Sigmoid colon (tissue), 7 donors: ENCODE measurements at regions of chr9 and their contacts with region 1.

Region 1: GRCh38 chr9:125464591-125465385 is 203.2 kb downstream of the GAPVD1 start:
- DNase-seq: no peak
- H3K4me3 ChIP-seq: no peak overlapping the region
- H3K27ac ChIP-seq: peak overlapping the region in 1 of 4 donors; percentile 40
- H3K4me1 ChIP-seq: peaks cover 0 to 45% (median 37%) of the 10 kb centered on the region in 4 donors
- H3K27me3 ChIP-seq: no peaks in the 10 kb centered on the region
- CTCF ChIP-seq: no peak
- EP300 ChIP-seq: no peak
- POLR2A ChIP-seq: no peak

Region 2: DNA sequence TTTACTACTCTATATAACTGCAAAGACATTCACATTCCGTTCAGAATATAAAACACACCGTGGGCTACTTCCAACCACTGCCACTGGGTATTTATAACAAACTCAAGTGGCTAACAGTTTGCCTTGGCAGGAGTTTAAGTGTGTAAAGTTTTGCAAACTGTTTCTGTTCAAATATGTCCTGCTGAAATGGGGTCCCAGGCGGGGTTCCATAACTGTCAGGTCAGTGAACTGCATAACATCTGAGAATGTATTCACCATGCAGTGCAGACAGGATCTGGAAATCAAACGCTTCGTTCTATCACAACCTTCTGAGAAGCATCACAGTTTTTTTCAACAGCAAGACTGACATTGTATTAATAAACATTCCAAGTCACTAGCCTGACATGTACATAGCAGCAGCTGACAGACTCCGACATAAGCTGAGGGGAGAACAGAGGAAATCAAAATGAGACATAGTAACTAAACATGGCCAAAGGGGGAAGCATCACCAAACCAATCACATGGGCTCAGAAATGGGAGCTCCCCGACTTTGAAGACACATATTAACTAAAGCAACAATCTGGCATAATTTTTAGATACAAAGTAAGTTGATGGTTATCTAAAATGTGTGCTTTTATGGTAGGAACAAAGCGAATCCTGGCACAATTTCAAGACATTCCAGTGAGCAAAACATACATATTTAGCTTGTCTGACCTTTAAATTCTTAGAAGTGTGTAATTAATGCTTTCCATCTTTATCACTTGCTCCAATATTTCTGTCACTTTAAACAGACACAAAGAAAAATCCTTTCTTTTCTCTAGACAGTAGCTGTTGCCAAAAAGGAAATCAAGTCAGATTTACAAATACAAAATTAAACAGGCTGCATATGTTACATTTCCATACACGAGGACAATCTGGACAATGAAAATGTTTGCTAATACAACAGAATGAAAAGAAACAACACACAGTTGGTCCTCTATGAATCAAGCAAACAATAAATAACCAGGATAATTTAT is 85.4 kb after region 1 on chr9:
- intact Hi-C with region 1: loop called (anchors 5 kb)
- DNase-seq: peak; percentile 74
- H3K4me3 ChIP-seq: peak overlapping the region in 1 of 4 donors; percentile 3
- H3K27ac ChIP-seq: peak overlapping the region; percentile 66 to 81 (median 76)
- H3K4me1 ChIP-seq: peaks cover 0 to 86% (median 75%) of the 10 kb centered on the region in 4 donors
- H3K27me3 ChIP-seq: no peaks in the 10 kb centered on the region
- CTCF ChIP-seq: no peak
- EP300 ChIP-seq: peak in 2 of 4 donors; percentile 32 to 49
- POLR2A ChIP-seq: no peak